K562 (cell line): ENCODE measurements at regions of chr12 and their contacts with region 1.

Region 1: DNA sequence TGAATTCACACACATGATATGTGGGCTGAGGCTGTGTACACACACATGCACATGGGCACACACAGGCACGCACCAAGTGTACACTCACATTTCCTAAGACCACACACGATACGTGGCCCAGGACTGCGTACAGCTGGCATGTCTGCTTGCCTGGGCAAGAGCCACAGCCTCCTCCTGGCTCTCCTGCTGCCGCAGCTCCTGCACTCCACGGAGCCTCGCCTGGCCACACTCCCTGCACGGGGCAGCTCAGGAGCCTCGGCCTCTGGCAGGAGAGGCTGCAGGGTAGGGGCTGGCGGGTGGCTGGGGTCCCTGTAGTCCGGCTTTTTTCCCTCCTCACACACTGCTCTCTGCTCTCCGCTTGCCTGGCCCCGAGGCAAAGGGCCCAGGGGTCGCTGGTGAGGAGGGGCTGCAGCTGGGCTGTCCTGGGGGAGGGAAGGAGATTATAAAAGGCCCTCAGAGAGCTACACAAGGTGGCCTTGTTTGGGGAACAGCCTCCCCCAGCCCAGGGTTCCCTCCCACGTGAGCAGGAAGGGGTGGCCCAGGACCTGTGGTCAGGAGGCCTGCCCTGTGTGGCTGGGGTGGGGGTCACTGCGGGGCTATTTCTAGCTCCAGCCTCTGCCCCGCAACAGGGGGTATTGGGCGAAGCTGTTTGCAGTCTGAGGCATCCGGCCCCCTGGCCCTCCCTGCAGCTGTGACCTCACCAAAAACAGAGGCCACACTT is 89.0 kb upstream of the SFSWAP start:
- DNase-seq: peak in 1 of 4 experiments; percentile 28
- ATAC-seq: peak; percentile 6; the same call in 1 of the 3 replicates
- H3K4me3 ChIP-seq: no peak overlapping the region
- H3K27ac ChIP-seq: no peak overlapping the region; the same call in 2 of the 3 replicates
- H3K4me1 ChIP-seq: peaks cover 22 to 69% of the 10 kb centered on the region in 2 experiments
- H3K27me3 ChIP-seq: peaks cover 26 to 33% of the 10 kb centered on the region in 2 experiments; a peak in 4 of 5 replicates
- CTCF ChIP-seq: no peak
- EP300 ChIP-seq: no peak
- POLR2A ChIP-seq: no peak
- RAD21 ChIP-seq: no peak

Region 2: GRCh38 chr12:131345521-131346436 is 276.1 kb before region 1 on chr12:
- CTCF ChIA-PET with region 1: no interaction called
- POLR2A ChIA-PET with region 1: no interaction called
- in situ Hi-C with region 1: no loop called
- intact Hi-C with region 1: loop called (anchors 2 kb)
- DNase-seq: no peak
- ATAC-seq: 0 out of 3 replicates have a peak, but pooled peaks have one; percentile 8
- H3K4me3 ChIP-seq: no peak overlapping the region
- H3K27ac ChIP-seq: no peak overlapping the region
- H3K4me1 ChIP-seq: peaks cover 29 to 30% of the 10 kb centered on the region in 2 experiments; a peak in 4 of 5 replicates
- H3K27me3 ChIP-seq: no peaks in the 10 kb centered on the region
- CTCF ChIP-seq: no peak
- EP300 ChIP-seq: no peak
- POLR2A ChIP-seq: no peak
- RAD21 ChIP-seq: no peak

Region 3: DNA sequence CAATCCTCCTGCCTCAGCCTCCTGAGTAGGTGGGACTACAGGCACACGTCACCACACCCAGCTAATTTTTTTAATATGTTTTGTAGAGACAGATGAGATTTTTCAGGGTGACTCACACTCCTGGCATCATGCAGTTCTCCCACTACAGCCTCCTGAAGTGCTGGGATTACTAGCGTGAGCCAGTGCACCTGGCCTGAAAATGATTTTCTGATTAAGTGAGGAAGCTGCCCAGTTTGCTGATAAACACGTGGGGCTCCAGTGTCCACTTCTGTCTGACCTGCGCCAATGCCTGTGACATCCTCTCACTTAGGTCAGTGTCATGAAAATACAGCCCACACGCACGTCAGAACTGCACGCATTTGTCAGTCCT is 52.0 kb after region 1 on chr12:
- CTCF ChIA-PET with region 1: no interaction called
- POLR2A ChIA-PET with region 1: no interaction called
- in situ Hi-C with region 1: no loop called
- intact Hi-C with region 1: no loop called
- DNase-seq: no peak
- ATAC-seq: no peak
- H3K4me3 ChIP-seq: no peak overlapping the region
- H3K27ac ChIP-seq: no peak overlapping the region
- H3K4me1 ChIP-seq: peaks cover 0 to 10% of the 10 kb centered on the region in 2 experiments; a peak in 1 of 5 replicates
- H3K27me3 ChIP-seq: peaks cover 27 to 48% of the 10 kb centered on the region in 2 experiments
- CTCF ChIP-seq: no peak
- EP300 ChIP-seq: no peak
- POLR2A ChIP-seq: no peak
- RAD21 ChIP-seq: no peak

Region 4: DNA sequence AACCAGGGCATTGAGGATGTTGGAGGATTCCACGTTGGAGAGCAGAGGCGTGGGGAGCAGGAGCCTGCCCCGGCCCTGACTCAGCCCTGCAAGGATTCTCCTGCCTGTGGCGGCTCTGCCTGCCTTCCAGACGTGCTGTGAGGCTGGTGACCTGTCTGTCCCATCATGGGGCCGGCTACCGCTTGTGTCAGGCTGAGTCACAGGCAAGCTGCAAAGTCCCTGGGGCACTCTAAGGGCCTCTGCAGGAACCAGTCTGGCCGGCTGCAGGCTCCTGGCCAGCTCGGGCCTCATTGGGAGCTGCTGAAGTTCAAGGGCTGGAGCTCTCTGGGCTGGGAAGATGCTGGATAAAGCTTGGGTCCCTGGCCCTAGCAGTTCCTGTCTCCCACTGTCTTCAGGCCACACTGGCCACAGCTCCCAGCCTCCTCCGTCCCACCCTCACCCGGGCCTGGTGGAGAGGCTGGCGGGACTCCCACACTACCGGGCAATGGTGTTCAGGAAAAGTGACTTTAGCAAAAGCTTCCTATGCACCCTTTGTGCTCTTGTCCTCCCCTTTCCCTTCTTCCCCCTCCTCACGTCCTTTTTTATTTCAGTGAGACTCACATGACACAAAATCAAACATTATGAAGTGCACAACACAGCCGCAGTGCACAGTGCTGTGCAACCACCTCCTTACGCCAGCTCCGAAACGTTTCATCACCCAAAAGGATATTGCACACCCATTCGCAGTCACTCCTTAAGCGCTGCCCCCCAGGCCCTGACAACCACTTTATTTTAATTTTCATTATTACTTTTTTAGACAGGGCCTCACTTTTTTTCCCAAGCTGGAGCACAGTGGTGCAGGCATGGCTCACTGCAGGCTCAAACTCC is 250.6 kb after region 1 on chr12:
- CTCF ChIA-PET with region 1: no interaction called
- POLR2A ChIA-PET with region 1: no interaction called
- in situ Hi-C with region 1: no loop called
- intact Hi-C with region 1: no loop called
- DNase-seq: no peak
- ATAC-seq: peak; percentile 56
- H3K4me3 ChIP-seq: no peak overlapping the region
- H3K27ac ChIP-seq: no peak overlapping the region
- H3K4me1 ChIP-seq: peaks cover 0 to 15% of the 10 kb centered on the region in 2 experiments; a peak in 2 of 5 replicates
- H3K27me3 ChIP-seq: no peaks in the 10 kb centered on the region
- CTCF ChIP-seq: no peak
- EP300 ChIP-seq: no peak
- POLR2A ChIP-seq: no peak
- RAD21 ChIP-seq: no peak